Heart left ventricle (tissue), 16 donors: ENCODE measurements at regions of chr17 and their contacts with region 1.

Region 1: DNA sequence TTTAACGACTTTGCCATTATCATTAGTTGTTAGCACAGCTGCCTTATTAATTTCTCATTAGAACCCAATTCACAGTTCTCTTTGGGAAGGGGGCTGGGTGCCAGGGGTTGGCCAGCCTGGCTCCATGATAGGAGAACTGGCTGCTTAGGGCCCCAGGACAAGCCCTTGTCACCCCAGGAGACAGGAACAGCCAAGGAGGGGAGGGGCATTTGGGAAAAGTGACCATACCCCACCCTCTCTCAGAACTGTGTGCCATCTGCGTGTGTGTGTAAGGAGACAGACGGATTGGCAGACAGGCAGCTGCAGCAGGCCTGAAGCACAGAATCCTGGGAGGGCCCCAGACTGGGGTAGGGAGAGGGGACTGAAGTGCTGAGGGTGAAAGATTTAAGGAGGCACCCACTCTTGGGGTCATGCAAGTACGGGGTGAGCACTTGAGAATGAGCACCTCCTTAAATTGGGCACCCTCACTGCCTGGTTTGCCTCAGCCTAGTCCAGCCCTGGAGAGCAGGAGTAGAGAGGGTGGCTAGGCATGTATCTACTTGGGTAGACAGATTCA is 154.0 kb upstream of the CDC42EP4 start:
- DNase-seq: no peak
- ATAC-seq: no peak
- H3K4me3 ChIP-seq: no peak overlapping the region
- H3K27ac ChIP-seq: no peak overlapping the region
- H3K4me1 ChIP-seq: no peaks in the 10 kb centered on the region
- H3K27me3 ChIP-seq: no peaks in the 10 kb centered on the region
- CTCF ChIP-seq: no peak
- POLR2A ChIP-seq: no peak

Region 2: DNA sequence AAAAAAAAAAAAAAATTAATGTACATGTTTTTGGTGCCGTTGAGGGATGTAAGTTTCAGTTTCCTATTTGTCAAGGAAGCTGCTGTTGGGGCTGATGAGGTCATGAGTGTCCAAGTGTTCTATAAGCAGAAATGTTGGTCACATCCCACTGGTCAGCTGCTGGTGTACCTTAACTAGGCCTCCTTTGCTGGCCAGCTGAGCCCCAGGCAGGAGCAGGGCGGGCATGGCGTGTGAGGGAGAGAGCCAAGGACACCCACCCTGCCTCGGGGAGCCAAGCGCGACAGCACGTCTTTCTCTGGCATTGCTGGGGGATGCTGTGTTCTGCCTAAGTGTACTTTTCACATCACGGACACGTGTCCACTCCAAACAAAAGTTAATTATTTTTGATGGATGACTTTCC is 45.9 kb before region 1 on chr17:
- intact Hi-C with region 1: loop called in 1 of 10 experiments (anchors 5 kb)
- DNase-seq: no peak
- ATAC-seq: no peak
- H3K4me3 ChIP-seq: no peak overlapping the region
- H3K27ac ChIP-seq: no peak overlapping the region
- H3K4me1 ChIP-seq: no peaks in the 10 kb centered on the region
- H3K27me3 ChIP-seq: no peaks in the 10 kb centered on the region
- CTCF ChIP-seq: no peak
- POLR2A ChIP-seq: no peak

Region 3: DNA sequence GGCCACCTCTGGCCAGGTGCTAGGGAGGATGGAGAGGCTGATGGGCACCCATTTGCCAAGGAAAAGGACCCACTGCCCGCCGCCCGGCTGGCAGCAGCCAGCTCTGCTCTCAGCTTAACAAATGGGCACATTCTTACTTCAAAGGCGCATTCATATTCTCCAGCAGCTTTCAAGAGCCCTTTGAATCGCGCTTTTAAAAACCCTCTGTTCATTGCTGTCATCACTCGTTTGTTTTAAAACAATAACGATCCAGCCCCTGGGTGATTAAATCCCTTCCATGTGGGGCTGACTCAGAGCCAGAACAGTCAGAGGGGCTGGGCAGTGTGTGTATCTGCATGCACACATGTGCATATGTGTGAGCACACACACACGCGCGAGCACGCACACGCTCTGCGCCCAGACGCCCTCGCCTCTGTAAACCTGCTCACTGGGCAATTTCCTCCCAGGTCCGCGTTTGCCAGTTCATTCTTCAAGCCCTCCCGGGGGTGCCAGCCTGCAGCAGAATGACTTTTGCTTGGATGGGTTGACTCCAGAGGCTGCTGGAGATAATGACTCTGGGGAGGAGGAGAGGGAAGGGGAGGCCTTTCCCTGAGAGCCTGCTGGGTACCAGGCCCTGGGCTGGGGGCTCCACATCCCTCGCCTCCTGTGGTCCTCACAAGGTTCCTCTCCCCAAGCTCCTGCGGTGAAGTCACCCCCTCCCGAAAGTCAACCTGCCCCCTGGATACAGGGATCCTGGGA is 45.4 kb after region 1 on chr17:
- intact Hi-C with region 1: no loop called
- DNase-seq: no peak
- ATAC-seq: no peak
- H3K4me3 ChIP-seq: no peak overlapping the region
- H3K27ac ChIP-seq: no peak overlapping the region
- H3K4me1 ChIP-seq: no peaks in the 10 kb centered on the region
- H3K27me3 ChIP-seq: no peaks in the 10 kb centered on the region
- CTCF ChIP-seq: no peak
- POLR2A ChIP-seq: no peak